Posterior vena cava (tissue), 2 donors: ENCODE measurements at regions of chr2 and their contacts with region 1.

Region 1: GRCh38 chr2:129469389-129469788 is 510.1 kb upstream of the RAB6C start:
- DNase-seq: no peak

Region 2: DNA sequence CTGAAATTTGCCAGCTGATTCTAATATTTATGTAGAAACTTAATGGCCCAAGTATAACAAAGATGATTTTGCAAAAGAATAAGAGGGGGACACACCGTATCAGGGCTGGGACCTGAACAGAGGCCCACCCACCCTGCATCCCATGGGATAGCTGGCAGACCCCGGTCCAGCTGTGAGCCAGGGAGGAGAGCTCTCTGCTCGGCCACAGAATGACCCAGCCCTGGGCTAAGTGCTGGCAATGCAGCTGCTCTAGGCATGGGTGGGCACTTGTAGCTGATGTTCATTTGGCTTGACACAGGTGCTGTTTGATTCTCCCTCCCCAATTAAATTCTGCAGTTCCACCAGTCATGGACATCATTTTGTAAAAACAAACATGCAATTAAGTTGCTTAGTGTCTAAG is 12.7 kb before region 1 on chr2:
- intact Hi-C with region 1: loop called in 1 of 2 experiments (anchors 2 kb)
- DNase-seq: no peak

Region 3: GRCh38 chr2:129499747-129500146 is 30.4 kb after region 1 on chr2:
- intact Hi-C with region 1: no loop called
- DNase-seq: no peak

Region 4: GRCh38 chr2:129636692-129637091 is 167.3 kb after region 1 on chr2:
- intact Hi-C with region 1: no loop called
- DNase-seq: no peak